Activated CD4-positive, alpha-beta memory T cell treated with anti-CD3 and anti-CD28 coated beads for 36 hours (primary cell): ENCODE measurements at regions of chr5 and their contacts with region 1.

Region 1: GRCh38 chr5:138337685-138338410 is at the start of gene FAM53C:
- DNase-seq: peak; percentile 94
- H3K4me3 Mint-ChIP-seq: peak within 1 kb of the TSS; percentile 93
- H3K27ac Mint-ChIP-seq: peak within 1 kb of the TSS; percentile 96
- H3K4me1 Mint-ChIP-seq: peaks cover 38% of the 10 kb centered on the region
- H3K27me3 Mint-ChIP-seq: no peaks in the 10 kb centered on the region
- total RNA-seq, gene FAM53C: 17.2 to 19.2 TPM

Region 2: DNA sequence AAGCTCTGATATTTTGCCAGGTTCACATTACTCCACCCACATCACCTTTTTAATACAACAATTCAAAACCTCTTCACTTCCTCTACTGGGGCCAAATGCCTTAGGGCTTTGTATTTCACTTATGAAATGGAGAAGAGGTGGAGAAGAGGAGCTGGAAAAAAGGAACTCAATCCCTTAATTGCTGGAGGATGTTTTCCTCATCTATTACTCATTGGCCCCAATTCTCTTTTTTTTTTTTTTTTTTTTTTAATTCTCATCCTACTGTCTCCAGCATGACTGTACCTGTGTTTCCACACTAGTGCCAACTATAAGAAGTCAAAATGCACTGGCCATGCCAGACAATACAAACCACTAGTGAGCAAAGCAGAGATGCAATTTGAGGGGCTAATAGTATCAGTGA is 325.9 kb before region 1 on chr5:
- CTCF ChIA-PET with region 1: no interaction called
- POLR2A ChIA-PET with region 1: no interaction called
- intact Hi-C with region 1: no loop called
- DNase-seq: no peak
- H3K4me3 Mint-ChIP-seq: no peak overlapping the region
- H3K27ac Mint-ChIP-seq: no peak overlapping the region
- H3K4me1 Mint-ChIP-seq: peaks cover 9% of the 10 kb centered on the region
- H3K27me3 Mint-ChIP-seq: no peaks in the 10 kb centered on the region

Region 3: DNA sequence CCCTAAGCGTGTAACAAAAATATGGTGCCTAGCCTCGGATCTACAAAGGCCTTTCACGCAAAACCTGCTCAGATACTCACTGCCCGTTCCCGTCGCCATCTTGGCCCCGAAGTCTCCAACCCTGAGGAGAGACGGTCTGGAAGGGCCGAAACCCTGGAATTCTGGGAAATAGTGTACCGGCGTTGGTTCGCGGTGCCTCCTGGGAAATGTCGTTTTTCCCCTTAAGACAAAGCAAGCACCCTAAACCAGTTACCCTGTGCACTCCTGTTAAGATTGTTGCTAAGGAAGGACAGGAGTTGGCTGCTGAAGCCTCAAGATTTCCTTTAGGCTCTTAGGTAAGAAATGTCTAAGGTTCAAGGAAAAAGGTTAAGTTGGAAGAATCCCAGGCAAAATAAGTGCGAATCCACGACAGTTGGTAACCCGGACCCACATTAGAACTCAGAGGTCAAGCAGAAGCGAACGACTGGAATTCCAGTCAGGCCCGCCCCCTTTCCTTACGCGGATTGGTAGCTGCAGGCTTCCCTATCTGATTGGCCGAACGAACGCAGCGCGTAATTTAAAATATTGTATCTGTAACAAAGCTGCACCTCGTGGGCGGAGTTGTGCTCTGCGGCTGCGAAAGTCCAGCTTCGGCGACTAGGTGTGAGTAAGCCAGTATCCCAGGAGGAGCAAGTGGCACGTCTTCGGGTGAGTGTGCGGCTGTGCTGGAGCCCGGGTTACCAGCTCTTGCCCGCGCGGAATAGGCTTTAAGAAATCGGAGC is 159.2 kb before region 1 on chr5 and contains the starts of genes BRD8 and KIF20A:
- CTCF ChIA-PET with region 1: interaction called, 4 read pairs
- POLR2A ChIA-PET with region 1: interaction called, 8 read pairs
- intact Hi-C with region 1: loop called (anchors 2 kb)
- DNase-seq: peak; percentile 96
- H3K4me3 Mint-ChIP-seq: no peak within 1 kb of the TSS
- H3K27ac Mint-ChIP-seq: no peak within 1 kb of the TSS
- H3K4me1 Mint-ChIP-seq: peaks cover 17% of the 10 kb centered on the region
- H3K27me3 Mint-ChIP-seq: no peaks in the 10 kb centered on the region
- total RNA-seq, gene BRD8: 62.9 to 65.8 TPM
- total RNA-seq, gene KIF20A: 55.5 to 60.3 TPM

Region 4: GRCh38 chr5:138252944-138253343 is 84.9 kb before region 1 on chr5:
- CTCF ChIA-PET with region 1: no interaction called
- POLR2A ChIA-PET with region 1: no interaction called
- intact Hi-C with region 1: no loop called
- DNase-seq: no peak
- H3K4me3 Mint-ChIP-seq: no peak overlapping the region
- H3K27ac Mint-ChIP-seq: no peak overlapping the region
- H3K4me1 Mint-ChIP-seq: no peaks in the 10 kb centered on the region
- H3K27me3 Mint-ChIP-seq: peaks cover 2% of the 10 kb centered on the region

Region 5: DNA sequence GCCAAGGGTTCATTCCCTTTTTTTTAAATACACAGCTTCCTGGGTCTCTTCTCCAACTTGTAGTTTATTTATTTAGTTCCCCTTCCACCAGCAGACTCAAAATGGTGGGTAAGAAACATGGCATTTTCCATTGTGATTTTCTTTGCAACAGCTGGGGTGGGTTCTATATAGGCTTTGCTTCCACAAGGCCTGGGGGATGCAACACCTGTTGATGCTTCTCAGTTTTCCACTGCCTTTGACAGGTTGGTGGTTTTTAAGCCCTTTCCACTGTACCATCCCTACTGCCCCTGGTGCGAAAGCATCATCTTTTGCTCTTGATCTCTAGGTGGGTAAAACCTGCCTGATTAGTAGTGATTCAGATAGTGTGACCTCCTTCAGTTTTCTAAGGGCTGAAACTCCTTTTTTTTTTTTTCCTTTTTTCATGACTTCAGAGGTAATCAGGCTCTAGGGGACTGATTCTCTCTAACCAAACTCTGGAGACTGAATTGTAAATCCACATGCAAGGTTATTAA is 23.1 kb after region 1 on chr5:
- CTCF ChIA-PET with region 1: no interaction called
- POLR2A ChIA-PET with region 1: no interaction called
- intact Hi-C with region 1: no loop called
- DNase-seq: no peak
- H3K4me3 Mint-ChIP-seq: no peak overlapping the region
- H3K27ac Mint-ChIP-seq: no peak overlapping the region
- H3K4me1 Mint-ChIP-seq: peaks cover 26% of the 10 kb centered on the region
- H3K27me3 Mint-ChIP-seq: no peaks in the 10 kb centered on the region

Region 6: DNA sequence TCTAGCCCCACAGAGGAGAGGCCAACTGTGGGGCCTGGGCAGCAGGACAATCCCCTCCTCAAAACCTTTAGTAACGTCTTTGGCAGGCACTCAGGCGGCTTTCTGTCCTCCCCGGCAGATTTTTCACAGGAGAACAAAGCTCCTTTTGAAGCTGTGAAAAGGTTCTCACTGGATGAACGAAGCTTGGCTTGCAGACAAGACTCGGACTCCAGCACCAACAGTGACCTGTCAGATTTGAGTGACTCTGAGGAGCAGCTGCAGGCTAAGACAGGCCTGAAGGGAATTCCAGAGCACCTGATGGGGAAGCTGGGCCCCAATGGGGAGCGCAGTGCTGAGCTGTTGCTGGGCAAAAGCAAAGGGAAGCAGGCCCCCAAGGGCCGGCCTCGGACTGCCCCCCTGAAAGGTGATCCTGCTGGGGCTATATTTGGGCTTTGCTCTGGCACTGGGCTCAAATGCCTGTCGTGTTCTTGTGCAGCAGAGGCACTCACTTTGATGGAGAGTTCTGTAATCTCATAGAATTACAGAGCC is 54.1 kb after region 1 on chr5:
- CTCF ChIA-PET with region 1: no interaction called
- POLR2A ChIA-PET with region 1: no interaction called
- intact Hi-C with region 1: no loop called
- DNase-seq: no peak
- H3K4me3 Mint-ChIP-seq: no peak overlapping the region
- H3K27ac Mint-ChIP-seq: no peak overlapping the region
- H3K4me1 Mint-ChIP-seq: no peaks in the 10 kb centered on the region
- H3K27me3 Mint-ChIP-seq: no peaks in the 10 kb centered on the region